ENCODE measurements at regions of chr3 and their contacts with region 1.

Region 1: DNA sequence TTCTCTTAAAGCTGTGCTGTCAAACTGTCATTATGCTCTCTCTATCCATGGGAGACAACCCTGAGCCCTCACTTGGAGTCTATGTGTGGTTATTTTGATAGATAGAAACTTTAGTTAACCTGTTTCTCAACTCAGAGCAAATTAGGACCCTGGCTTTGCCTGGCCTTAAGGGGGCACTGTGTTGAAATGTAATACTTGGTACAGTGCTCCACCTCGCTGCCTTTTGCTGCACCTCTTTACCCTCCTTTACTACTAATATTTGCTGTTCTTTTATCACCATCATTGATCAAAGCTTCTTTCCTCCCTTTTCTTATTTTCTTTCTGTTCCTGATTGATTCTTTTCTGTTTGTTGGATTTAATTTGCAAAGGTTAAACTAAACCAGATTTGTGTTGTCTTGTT is 34.3 kb downstream of the STT3B start:
- DNase-seq: peak in 5 of 14 experiments; percentile 8 to 66 (median 45)
- ATAC-seq: peak; percentile 78
- H3K4me3 ChIP-seq: no peak overlapping the region
- H3K4me3 Mint-ChIP-seq: peak overlapping the region; percentile 68
- H3K27ac ChIP-seq: no peak overlapping the region
- H3K27ac Mint-ChIP-seq: peak overlapping the region; percentile 53
- H3K4me1 ChIP-seq: peaks cover 27% of the 10 kb centered on the region
- H3K4me1 Mint-ChIP-seq: peaks cover 93% of the 10 kb centered on the region
- H3K27me3 ChIP-seq: no peaks in the 10 kb centered on the region
- H3K27me3 Mint-ChIP-seq: no peaks in the 10 kb centered on the region
- CTCF ChIP-seq: peak; percentile 74

Region 2: GRCh38 chr3:31550452-31551251 is 16.4 kb before region 1 on chr3:
- CTCF ChIA-PET with region 1: interaction called, 5 read pairs
- POLR2A ChIA-PET with region 1: interaction called, 3 read pairs
- intact Hi-C with region 1: loop called in 1 of 2 experiments (anchors 2 kb)
- DNase-seq: peak in 3 of 14 experiments; percentile 52 to 70 (median 67)
- ATAC-seq: peak; percentile 70
- H3K4me3 ChIP-seq: no peak overlapping the region
- H3K4me3 Mint-ChIP-seq: peak overlapping the region; percentile 38
- H3K27ac ChIP-seq: no peak overlapping the region
- H3K27ac Mint-ChIP-seq: peak overlapping the region; percentile 40
- H3K4me1 ChIP-seq: peaks cover 18% of the 10 kb centered on the region
- H3K4me1 Mint-ChIP-seq: peaks cover 94% of the 10 kb centered on the region
- H3K27me3 ChIP-seq: no peaks in the 10 kb centered on the region
- H3K27me3 Mint-ChIP-seq: no peaks in the 10 kb centered on the region
- CTCF ChIP-seq: peak; percentile 86